SK-N-SH (cell line): ENCODE measurements at regions of chr20 and their contacts with region 1.

Region 1: GRCh38 chr20:58209652-58210397 is 18.6 kb downstream of the ANKRD60 start:
- DNase-seq: peak; percentile 94
- H3K4me3 ChIP-seq: peak overlapping the region in 1 of 2 experiments; percentile 56; a peak in 1 of 4 replicates
- H3K27ac ChIP-seq: no peak overlapping the region
- H3K4me1 ChIP-seq: peaks cover 0 to 11% of the 10 kb centered on the region in 2 experiments; a peak in 1 of 4 replicates
- H3K27me3 ChIP-seq: no peaks in the 10 kb centered on the region; the same call in 1 of the 2 replicates
- CTCF ChIP-seq: peak; percentile 100
- EP300 ChIP-seq: no peak
- RAD21 ChIP-seq: peak; percentile 99

Region 2: DNA sequence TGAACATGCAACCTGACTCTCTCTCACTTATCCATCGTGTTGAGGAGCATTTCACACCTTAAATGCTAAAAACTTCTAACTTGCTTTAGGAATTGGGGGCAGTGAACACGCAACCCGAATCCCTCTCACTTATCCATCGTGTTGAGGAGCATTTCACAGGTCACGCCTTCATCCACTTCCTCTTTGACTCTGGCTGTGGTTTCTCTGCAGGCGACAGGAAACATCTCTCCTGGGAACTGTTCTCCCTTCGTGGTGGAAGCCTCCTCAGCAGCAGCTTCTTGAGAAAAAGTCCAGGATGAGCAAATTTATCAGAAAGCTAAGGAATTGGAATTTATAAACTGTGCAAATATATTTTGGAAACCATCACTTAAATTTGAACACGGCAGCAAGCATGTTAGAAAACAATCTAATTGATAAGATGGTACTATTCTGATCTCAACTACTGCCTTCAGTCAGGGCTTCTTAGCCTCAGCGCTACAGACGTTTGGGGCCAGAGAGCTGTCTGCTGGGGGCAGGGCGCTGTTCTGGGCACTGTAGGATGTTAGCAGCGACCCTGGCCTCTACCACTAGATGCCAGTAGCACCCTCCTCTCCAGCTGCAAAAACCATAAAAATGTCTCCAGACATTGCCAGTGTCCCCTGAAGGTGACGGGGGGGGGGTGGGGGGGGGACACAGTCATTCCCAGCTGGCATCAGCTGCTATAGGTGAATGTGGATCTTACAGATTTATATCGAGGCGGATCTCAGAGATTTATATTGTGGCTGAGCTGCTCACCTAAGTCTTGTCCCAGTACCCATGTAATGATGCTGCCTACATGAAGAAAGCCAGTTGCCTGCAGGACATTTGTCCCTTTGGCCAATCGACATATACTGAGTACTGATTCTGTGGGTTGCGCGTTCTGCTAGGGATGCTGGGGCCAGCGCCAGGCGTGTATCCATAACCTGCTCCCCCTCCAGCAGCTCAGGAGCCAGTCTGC is 711.1 kb before region 1 on chr20:
- CTCF ChIA-PET with region 1: interaction called, 17 read pairs
- POLR2A ChIA-PET with region 1: no interaction called
- DNase-seq: peak; percentile 60
- H3K4me3 ChIP-seq: no peak overlapping the region
- H3K27ac ChIP-seq: no peak overlapping the region
- H3K4me1 ChIP-seq: peaks cover 2 to 6% of the 10 kb centered on the region in 2 experiments; a peak in 2 of 4 replicates
- H3K27me3 ChIP-seq: no peaks in the 10 kb centered on the region; the same call in 1 of the 2 replicates
- CTCF ChIP-seq: peak; percentile 47
- EP300 ChIP-seq: no peak
- RAD21 ChIP-seq: peak; percentile 66

Region 3: GRCh38 chr20:57596998-57597939 is 612.6 kb before region 1 on chr20:
- CTCF ChIA-PET with region 1: interaction called, 356 read pairs
- POLR2A ChIA-PET with region 1: no interaction called
- DNase-seq: peak; percentile 94
- H3K4me3 ChIP-seq: peak overlapping the region in 1 of 2 experiments; percentile 18; a peak in 1 of 4 replicates
- H3K27ac ChIP-seq: no peak overlapping the region
- H3K4me1 ChIP-seq: peaks cover 0 to 9% of the 10 kb centered on the region in 2 experiments; a peak in 1 of 4 replicates
- H3K27me3 ChIP-seq: no peaks in the 10 kb centered on the region
- CTCF ChIP-seq: peak; percentile 83
- EP300 ChIP-seq: no peak
- RAD21 ChIP-seq: peak; percentile 82

Region 4: DNA sequence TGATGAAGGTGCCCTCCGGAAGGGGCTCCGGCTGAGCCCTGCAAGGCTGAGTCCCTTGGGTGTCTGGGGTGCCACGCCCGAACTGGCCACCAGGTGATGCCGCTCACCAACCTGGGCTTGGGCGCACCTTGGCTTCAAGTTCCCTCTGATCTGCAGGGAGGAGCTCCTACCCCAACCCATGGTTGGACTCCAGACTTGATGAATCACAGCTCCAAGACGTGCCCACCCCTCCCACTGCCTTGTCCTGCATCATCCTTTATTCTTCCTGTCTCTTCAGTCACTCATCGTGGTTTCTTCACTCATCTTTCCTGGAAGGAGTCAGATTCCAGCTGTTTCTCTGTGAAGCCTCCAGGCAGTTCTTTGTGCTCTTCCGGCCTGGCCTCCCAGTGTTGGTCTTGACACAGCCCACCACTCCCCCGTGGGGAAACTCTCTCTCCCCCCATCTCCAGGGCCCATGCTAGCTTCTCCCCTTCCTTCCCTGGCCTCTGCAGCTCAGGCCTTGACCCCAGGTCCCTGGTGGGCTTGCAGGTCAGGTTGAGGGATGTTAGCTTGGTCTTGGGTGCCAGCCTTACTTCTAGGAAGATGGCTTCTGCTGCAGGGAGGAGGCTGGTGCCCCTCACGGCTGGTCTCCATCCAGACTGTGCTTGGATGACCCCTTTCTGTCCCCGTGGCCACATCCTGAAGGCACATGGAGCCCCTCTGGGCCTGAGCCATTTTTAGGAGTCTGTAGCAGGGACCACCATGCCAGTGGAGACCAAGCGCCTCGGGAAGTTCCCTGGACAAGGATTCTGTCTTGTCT is 587.0 kb before region 1 on chr20:
- CTCF ChIA-PET with region 1: interaction called, 82 read pairs
- POLR2A ChIA-PET with region 1: no interaction called
- DNase-seq: peak; percentile 84
- H3K4me3 ChIP-seq: no peak overlapping the region
- H3K27ac ChIP-seq: no peak overlapping the region
- H3K4me1 ChIP-seq: peaks cover 0 to 10% of the 10 kb centered on the region in 2 experiments; a peak in 1 of 4 replicates
- H3K27me3 ChIP-seq: no peaks in the 10 kb centered on the region
- CTCF ChIP-seq: peak; percentile 78
- EP300 ChIP-seq: no peak
- RAD21 ChIP-seq: peak; percentile 87

Region 5: GRCh38 chr20:58054780-58055373 is 154.9 kb before region 1 on chr20:
- CTCF ChIA-PET with region 1: no interaction called
- POLR2A ChIA-PET with region 1: no interaction called
- DNase-seq: no peak
- H3K4me3 ChIP-seq: no peak overlapping the region
- H3K27ac ChIP-seq: no peak overlapping the region; a peak in 1 of 4 replicates
- H3K4me1 ChIP-seq: peaks cover 0 to 14% of the 10 kb centered on the region in 2 experiments; a peak in 1 of 4 replicates
- H3K27me3 ChIP-seq: no peaks in the 10 kb centered on the region; the same call in 1 of the 2 replicates
- CTCF ChIP-seq: no peak
- EP300 ChIP-seq: no peak
- RAD21 ChIP-seq: no peak

Region 6: GRCh38 chr20:58192567-58192966 is 17.3 kb before region 1 on chr20:
- CTCF ChIA-PET with region 1: interaction called, 20 read pairs
- POLR2A ChIA-PET with region 1: no interaction called
- DNase-seq: peak; percentile 65
- H3K4me3 ChIP-seq: no peak overlapping the region; a peak in 1 of 4 replicates
- H3K27ac ChIP-seq: no peak overlapping the region
- H3K4me1 ChIP-seq: no peaks in the 10 kb centered on the region; a peak in 1 of 4 replicates
- H3K27me3 ChIP-seq: peaks cover 5% of the 10 kb centered on the region; the same call in 1 of the 2 replicates
- CTCF ChIP-seq: peak; percentile 71
- EP300 ChIP-seq: no peak
- RAD21 ChIP-seq: peak; percentile 48

Region 7: GRCh38 chr20:58312836-58313235 is 103.0 kb after region 1 on chr20:
- CTCF ChIA-PET with region 1: no interaction called
- POLR2A ChIA-PET with region 1: no interaction called
- DNase-seq: no peak
- H3K4me3 ChIP-seq: no peak overlapping the region
- H3K27ac ChIP-seq: no peak overlapping the region
- H3K4me1 ChIP-seq: peaks cover 4 to 7% of the 10 kb centered on the region in 2 experiments; a peak in 3 of 4 replicates
- H3K27me3 ChIP-seq: no peaks in the 10 kb centered on the region
- CTCF ChIP-seq: no peak
- EP300 ChIP-seq: no peak
- RAD21 ChIP-seq: no peak

Region 8: GRCh38 chr20:59455402-59456341 is 1245.8 kb after region 1 on chr20:
- CTCF ChIA-PET with region 1: interaction called, 10 read pairs
- POLR2A ChIA-PET with region 1: no interaction called
- DNase-seq: peak; percentile 77
- H3K4me3 ChIP-seq: peak overlapping the region in 1 of 2 experiments; percentile 48; a peak in 1 of 4 replicates
- H3K27ac ChIP-seq: peak overlapping the region in 1 of 2 experiments; percentile 74; a peak in 2 of 4 replicates
- H3K4me1 ChIP-seq: peaks cover 0 to 24% of the 10 kb centered on the region in 2 experiments; a peak in 1 of 4 replicates
- H3K27me3 ChIP-seq: no peaks in the 10 kb centered on the region
- CTCF ChIP-seq: peak; percentile 81
- EP300 ChIP-seq: no peak
- RAD21 ChIP-seq: peak; percentile 89